Esophagus squamous epithelium (tissue), 5 donors: ENCODE measurements at regions of chr18 and their contacts with region 1.

Region 1: DNA sequence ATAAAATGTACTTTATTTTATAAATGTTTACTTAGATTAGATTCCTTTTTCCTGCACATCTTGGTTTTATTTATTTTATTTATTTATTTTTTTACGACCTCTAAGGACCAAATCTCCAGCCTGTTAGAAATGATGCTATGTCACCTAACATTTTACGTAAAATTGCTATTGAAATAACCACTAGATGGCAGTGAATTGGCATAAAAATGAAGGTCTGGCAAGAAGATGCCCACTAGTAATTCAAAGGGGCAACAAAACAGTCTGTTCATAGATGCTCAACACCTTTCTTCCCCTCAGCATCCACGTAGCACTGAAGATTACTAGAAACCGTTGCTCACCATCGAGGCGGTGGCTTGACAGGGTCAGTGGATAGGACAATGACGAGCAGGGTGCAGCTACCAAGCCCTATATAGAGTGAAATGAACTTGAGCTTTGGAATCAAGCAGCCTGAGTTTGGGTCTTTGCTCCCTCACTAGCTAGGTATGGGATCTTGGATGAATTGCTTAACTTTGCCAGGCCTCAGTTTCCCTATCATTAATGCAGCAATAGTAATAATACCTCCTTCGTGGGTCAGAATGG is 128.7 kb upstream of the L3MBTL4 start:
- DNase-seq: no peak
- H3K4me3 ChIP-seq: no peak overlapping the region
- H3K27ac ChIP-seq: no peak overlapping the region
- H3K4me1 ChIP-seq: peaks cover 0 to 23% (median 0%) of the 10 kb centered on the region in 3 donors
- H3K27me3 ChIP-seq: no peaks in the 10 kb centered on the region
- CTCF ChIP-seq: peak in 5 of 6 experiments; percentile 30 to 62 (median 50)
- POLR2A ChIP-seq: no peak

Region 2: DNA sequence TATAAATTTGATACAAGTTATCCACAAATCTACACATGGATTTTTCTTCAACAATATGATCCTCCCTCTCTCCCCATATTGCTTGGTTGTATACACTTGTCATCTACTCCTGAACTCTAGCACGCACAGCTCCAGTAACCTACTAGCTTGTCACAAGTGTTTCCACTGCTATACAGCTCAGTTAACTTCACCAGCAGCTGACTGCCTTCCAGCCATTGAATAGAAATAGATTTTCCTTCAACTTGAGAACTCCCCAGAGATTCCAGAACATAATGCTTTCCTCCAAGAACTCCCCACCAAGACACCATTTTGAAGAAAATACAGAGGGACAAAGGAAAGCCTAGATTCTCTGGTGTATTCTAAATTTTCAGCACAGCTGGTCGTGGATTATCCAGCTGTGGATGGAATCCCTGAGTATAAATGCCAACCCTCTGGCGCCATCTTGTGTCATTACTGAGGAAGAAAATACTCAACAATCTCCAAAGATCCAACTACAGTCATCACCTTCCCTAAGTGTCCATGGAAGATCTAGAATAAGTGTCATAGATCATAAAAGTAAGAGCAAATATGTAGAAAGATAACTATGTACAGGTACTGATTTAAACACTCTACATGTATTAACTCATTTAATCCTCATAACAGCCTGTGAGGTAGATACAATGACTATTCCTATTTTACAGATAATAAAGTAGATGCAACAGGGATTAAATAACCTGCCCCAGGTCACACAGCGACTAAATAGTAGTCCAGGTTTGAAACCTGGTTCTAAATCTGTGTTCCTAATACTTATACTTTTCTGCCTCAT is 342.8 kb after region 1 on chr18:
- intact Hi-C with region 1: loop called (anchors 2 kb)
- DNase-seq: no peak
- H3K4me3 ChIP-seq: no peak overlapping the region
- H3K27ac ChIP-seq: peak overlapping the region in 1 of 4 donors; percentile 71
- H3K4me1 ChIP-seq: peaks cover 3 to 34% (median 4%) of the 10 kb centered on the region in 3 donors
- H3K27me3 ChIP-seq: no peaks in the 10 kb centered on the region
- CTCF ChIP-seq: peak; percentile 13 to 74 (median 50)
- POLR2A ChIP-seq: no peak